HCT116 (cell line): ENCODE measurements at regions of chr11 and their contacts with region 1.

Region 1: GRCh38 chr11:61384271-61385242 is 7.8 kb upstream of the TMEM216 start:
- DNase-seq: no peak
- ATAC-seq: peak; percentile 31; the same call in 1 of the 2 replicates
- H3K4me3 ChIP-seq: no peak overlapping the region
- H3K27ac ChIP-seq: no peak overlapping the region; the same call in 1 of the 2 replicates
- H3K4me1 ChIP-seq: no peaks in the 10 kb centered on the region
- H3K27me3 ChIP-seq: no peaks in the 10 kb centered on the region
- CTCF ChIP-seq: peak; percentile 3 to 32 (median 20); a peak in 2 of 6 replicates
- POLR2A ChIP-seq: no peak
- RAD21 ChIP-seq: peak; percentile 36

Region 2: DNA sequence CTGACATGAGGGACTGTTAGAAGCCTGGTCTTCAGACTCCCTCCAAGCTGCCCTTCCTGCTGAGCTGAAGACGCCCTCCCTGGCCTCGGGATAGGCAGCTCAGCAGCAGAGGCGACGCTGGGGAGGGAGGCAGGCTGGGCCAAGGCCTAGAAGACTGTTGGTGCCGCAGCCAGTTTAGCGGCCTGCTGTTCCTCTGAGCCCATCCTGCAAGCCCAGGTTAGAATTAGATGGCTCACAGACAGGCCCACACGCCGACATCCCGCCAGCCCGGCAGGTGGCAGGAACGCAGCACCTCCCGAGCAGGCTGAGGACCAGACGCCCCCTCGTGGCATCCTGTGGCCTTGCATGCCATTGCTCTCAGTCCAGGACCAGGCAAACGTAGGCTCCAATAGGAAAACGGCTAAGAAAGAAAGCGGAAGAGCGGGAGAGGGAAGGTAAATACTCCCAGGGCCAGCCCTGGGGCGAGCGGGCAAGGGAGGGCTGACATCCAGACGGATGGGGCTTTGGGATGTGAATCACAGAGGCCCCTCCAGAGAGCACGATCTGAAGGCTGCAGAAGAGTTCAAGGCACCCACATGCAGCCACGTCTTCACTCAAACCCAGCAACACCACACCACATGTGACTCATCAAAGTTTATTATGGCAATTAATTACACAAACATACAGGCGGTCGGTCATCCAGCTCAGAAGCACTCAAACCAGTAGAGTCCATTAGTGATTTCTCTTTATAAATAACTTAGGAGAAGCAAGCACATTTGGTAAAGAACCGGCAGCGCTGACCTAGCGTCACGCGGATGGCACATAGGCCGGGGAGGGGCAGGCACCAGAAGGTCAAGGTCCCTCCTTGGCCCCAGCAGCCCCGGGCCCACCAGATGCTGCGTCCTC is 254.7 kb before region 1 on chr11:
- CTCF ChIA-PET with region 1: interaction called, 3 read pairs
- POLR2A ChIA-PET with region 1: no interaction called
- RAD21 ChIA-PET with region 1: no interaction called
- intact Hi-C with region 1: loop called (anchors 1 kb)
- DNase-seq: peak; percentile 73
- ATAC-seq: peak; percentile 95
- H3K4me3 ChIP-seq: peak overlapping the region in 1 of 2 experiments; percentile 37; a peak in 3 of 4 replicates
- H3K27ac ChIP-seq: peak overlapping the region; percentile 45
- H3K4me1 ChIP-seq: peaks cover 6 to 18% of the 10 kb centered on the region in 2 experiments; a peak in 3 of 4 replicates
- H3K27me3 ChIP-seq: no peaks in the 10 kb centered on the region
- CTCF ChIP-seq: peak; percentile 100
- POLR2A ChIP-seq: no peak
- RAD21 ChIP-seq: peak; percentile 98

Region 3: DNA sequence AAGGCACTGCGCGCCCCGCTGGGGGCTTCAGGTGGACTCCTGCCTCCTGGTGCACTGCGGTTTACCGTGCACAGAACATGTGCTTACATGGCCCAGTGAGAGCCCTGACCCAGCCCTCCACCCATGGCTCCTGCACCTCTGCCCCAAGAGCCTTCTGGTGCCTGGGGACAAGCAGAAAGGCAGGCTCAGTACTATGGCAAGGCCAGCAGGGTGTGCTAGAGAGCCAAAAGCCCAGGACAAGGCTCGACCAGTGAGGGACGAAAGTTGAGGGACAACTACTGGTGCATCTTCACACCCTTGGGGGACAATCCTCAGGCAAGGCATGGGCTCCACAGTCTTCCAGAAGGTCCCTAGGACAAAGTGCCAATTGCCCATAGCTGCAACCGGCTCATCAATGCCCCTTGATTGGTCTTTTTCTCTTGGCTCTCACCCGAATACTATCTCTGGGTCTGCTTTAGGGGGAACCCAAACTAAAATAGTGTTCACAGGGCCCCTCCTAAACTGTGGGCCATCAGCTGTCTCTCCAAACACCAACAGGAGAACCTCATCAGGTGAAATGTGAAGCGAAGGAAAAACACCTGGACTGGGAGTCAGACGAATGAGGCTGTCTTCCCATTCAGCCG is 130.0 kb before region 1 on chr11:
- CTCF ChIA-PET with region 1: interaction called, 4 read pairs
- POLR2A ChIA-PET with region 1: no interaction called
- RAD21 ChIA-PET with region 1: no interaction called
- intact Hi-C with region 1: loop called (anchors 1 kb)
- DNase-seq: peak; percentile 34
- ATAC-seq: peak; percentile 99
- H3K4me3 ChIP-seq: no peak overlapping the region
- H3K27ac ChIP-seq: no peak overlapping the region
- H3K4me1 ChIP-seq: no peaks in the 10 kb centered on the region
- H3K27me3 ChIP-seq: no peaks in the 10 kb centered on the region
- CTCF ChIP-seq: peak; percentile 58 to 89 (median 88); a peak in 5 of 6 replicates
- POLR2A ChIP-seq: no peak
- RAD21 ChIP-seq: peak; percentile 76

Region 4: DNA sequence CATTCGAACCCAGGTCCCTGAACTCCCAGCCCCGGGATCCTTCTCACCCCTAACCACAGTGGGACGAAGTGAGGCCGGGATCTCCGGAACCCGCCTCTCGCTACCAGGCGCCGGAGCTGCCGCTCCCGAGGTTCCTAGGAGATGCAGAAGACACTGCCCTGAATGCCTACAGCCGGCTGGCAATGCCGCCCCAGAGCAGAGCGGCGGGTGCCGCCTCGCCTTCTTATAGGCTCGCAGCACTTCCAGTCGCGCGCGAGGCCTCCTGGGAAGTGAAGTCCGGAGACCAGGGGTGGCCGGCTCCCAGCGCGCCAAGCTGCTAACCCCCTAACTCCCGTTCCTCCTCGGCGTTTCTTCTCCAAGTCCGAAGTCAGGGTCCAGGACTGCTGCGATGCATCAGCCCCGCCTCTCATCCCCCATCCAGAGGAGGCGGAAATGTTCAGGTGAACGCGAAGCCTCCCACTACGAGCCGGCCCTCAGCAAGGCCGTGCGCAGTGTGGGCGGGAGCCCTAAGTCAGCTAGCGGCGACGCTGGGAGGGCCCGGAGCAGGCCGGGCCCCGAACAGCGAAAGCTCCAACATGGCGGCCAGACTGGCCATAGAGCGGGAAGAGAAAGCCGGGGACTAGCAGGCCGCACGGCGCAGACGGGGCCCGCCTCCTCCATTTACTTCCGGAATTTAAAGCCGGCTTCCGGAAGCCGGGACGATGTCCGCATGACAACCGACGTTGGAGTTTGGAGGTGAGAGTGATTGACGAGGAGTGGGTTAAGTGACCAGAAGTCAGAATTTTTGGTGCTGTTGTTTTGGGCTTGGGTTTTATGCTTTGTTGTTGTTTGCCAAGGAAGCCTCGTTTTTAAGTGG is 22.6 kb before region 1 on chr11 and contains the starts of genes CYB561A3 and TMEM138:
- CTCF ChIA-PET with region 1: interaction called, 25 read pairs
- POLR2A ChIA-PET with region 1: interaction called, 12 read pairs
- RAD21 ChIA-PET with region 1: no interaction called
- intact Hi-C with region 1: no loop called
- DNase-seq: peak; percentile 88
- ATAC-seq: peak; percentile 92
- H3K4me3 ChIP-seq: peak within 1 kb of the TSS; percentile 89 to 93
- H3K27ac ChIP-seq: peak within 1 kb of the TSS; percentile 97
- H3K4me1 ChIP-seq: peaks cover 0 to 22% of the 10 kb centered on the region in 2 experiments; a peak in 2 of 4 replicates
- H3K27me3 ChIP-seq: no peaks in the 10 kb centered on the region
- CTCF ChIP-seq: no peak
- POLR2A ChIP-seq: peak; percentile 92
- RAD21 ChIP-seq: no peak
- total RNA-seq, gene CYB561A3: 34.1 TPM
- total RNA-seq, gene TMEM138: 45.0 TPM